ENCODE measurements at regions of chr10 and their contacts with region 1.

Region 1: GRCh38 chr10:55273946-55274345 is 472.9 kb upstream of the PCDH15 start:
- DNase-seq: no peak
- ATAC-seq: no peak
- H3K4me3 ChIP-seq: no peak overlapping the region
- H3K27ac ChIP-seq: no peak overlapping the region
- H3K4me1 ChIP-seq: no peaks in the 10 kb centered on the region
- H3K27me3 ChIP-seq: no peaks in the 10 kb centered on the region
- CTCF ChIP-seq: no peak
- EP300 ChIP-seq: no peak
- POLR2A ChIP-seq: no peak
- RAD21 ChIP-seq: no peak

Region 2: GRCh38 chr10:55500932-55501559 is 227.1 kb after region 1 on chr10:
- CTCF ChIA-PET with region 1: no interaction called
- POLR2A ChIA-PET with region 1: no interaction called
- RAD21 ChIA-PET with region 1: no interaction called
- SMC1A ChIA-PET with region 1: no interaction called
- in situ Hi-C with region 1: no loop called
- intact Hi-C with region 1: loop called (anchors 2 kb)
- DNase-seq: no peak
- ATAC-seq: peak; percentile 91
- H3K4me3 ChIP-seq: no peak overlapping the region
- H3K27ac ChIP-seq: no peak overlapping the region
- H3K4me1 ChIP-seq: no peaks in the 10 kb centered on the region
- H3K27me3 ChIP-seq: no peaks in the 10 kb centered on the region
- CTCF ChIP-seq: peak; percentile 60 to 69 (median 63)
- EP300 ChIP-seq: no peak
- POLR2A ChIP-seq: no peak
- RAD21 ChIP-seq: peak; percentile 79

Measured in GM12878 (cell line).